GM23248 (cell line): ENCODE measurements at regions of chr2 and their contacts with region 1.

Region 1: DNA sequence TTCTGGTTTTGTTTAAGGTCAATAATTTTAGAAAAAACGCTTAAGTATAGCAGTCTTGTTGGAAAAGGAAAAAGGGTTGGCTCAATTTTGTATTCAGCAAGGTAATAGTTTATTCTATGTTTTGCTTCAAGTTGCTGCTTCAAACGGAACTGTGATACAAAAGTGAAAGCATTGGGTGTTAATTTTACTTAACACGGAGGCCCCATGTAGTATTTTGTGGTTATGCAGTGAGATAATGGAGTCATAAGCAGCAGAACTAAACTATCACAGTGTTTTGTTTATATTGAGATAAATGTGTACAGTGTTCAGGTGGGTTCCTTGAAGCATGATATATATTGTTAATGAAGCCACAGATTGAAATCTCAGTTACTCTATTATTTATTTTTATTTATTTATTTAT is 67.0 kb upstream of the LYPD6B start:
- DNase-seq: no peak
- H3K4me3 ChIP-seq: no peak overlapping the region
- H3K27ac ChIP-seq: no peak overlapping the region
- H3K4me1 ChIP-seq: no peaks in the 10 kb centered on the region
- H3K27me3 ChIP-seq: no peaks in the 10 kb centered on the region

Region 2: GRCh38 chr2:148634749-148635148 is 336.8 kb before region 1 on chr2:
- in situ Hi-C with region 1: loop called (anchors 10 kb)
- DNase-seq: no peak
- H3K4me3 ChIP-seq: no peak overlapping the region
- H3K27ac ChIP-seq: no peak overlapping the region
- H3K4me1 ChIP-seq: no peaks in the 10 kb centered on the region
- H3K27me3 ChIP-seq: no peaks in the 10 kb centered on the region; the same call in 1 of the 2 replicates